ENCODE measurements at regions of chr10 and their contacts with region 1.

Region 1: DNA sequence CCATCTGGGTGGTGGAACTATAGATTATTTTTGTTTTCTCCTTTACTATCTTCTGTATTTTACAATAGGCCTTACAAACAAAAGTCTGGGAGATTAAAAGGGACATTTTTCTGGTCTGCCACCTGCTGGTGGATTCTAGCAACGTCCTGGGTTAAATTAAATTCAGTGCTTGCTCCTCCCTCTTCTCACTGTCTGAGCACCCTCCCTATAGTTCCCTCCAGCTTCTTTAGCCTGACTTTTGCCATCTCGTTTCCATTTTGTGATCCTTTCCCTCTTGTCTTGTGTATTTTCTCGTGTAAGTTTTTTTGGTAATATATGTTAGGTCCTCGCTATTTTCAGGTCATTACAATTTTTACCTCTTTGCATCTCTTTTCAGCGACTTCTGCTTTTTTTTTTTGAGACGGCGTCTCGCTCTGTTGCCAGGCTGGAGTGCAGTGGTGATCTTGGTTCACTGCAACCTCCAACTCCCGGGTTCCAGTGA is 16.1 kb downstream of the ANKRD16 start:
- DNase-seq: peak; percentile 90
- ATAC-seq: peak; percentile 88
- H3K4me3 ChIP-seq: peak overlapping the region; percentile 18 to 52 (median 41)
- H3K4me3 Mint-ChIP-seq: peak overlapping the region; percentile 89
- H3K27ac ChIP-seq: peak overlapping the region; percentile 70 to 76
- H3K27ac Mint-ChIP-seq: peak overlapping the region; percentile 93
- H3K4me1 ChIP-seq: peaks cover 12 to 19% of the 10 kb centered on the region in 2 donors
- H3K4me1 Mint-ChIP-seq: peaks cover 20% of the 10 kb centered on the region
- H3K27me3 ChIP-seq: no peaks in the 10 kb centered on the region
- H3K27me3 Mint-ChIP-seq: no peaks in the 10 kb centered on the region
- CTCF ChIP-seq: peak; percentile 85

Region 2: GRCh38 chr10:5446390-5446926 is 427.1 kb before region 1 on chr10:
- CTCF ChIA-PET with region 1: interaction called, 3 read pairs
- POLR2A ChIA-PET with region 1: no interaction called
- intact Hi-C with region 1: loop called (anchors 2 kb)
- DNase-seq: peak; percentile 89
- ATAC-seq: peak; percentile 96
- H3K4me3 ChIP-seq: peak overlapping the region; percentile 45 to 76 (median 62)
- H3K4me3 Mint-ChIP-seq: peak overlapping the region; percentile 91
- H3K27ac ChIP-seq: peak overlapping the region; percentile 30 to 44
- H3K27ac Mint-ChIP-seq: peak overlapping the region; percentile 87
- H3K4me1 ChIP-seq: peaks cover 20 to 21% of the 10 kb centered on the region in 2 donors
- H3K4me1 Mint-ChIP-seq: peaks cover 47% of the 10 kb centered on the region
- H3K27me3 ChIP-seq: no peaks in the 10 kb centered on the region
- H3K27me3 Mint-ChIP-seq: no peaks in the 10 kb centered on the region
- CTCF ChIP-seq: no peak

Region 3: DNA sequence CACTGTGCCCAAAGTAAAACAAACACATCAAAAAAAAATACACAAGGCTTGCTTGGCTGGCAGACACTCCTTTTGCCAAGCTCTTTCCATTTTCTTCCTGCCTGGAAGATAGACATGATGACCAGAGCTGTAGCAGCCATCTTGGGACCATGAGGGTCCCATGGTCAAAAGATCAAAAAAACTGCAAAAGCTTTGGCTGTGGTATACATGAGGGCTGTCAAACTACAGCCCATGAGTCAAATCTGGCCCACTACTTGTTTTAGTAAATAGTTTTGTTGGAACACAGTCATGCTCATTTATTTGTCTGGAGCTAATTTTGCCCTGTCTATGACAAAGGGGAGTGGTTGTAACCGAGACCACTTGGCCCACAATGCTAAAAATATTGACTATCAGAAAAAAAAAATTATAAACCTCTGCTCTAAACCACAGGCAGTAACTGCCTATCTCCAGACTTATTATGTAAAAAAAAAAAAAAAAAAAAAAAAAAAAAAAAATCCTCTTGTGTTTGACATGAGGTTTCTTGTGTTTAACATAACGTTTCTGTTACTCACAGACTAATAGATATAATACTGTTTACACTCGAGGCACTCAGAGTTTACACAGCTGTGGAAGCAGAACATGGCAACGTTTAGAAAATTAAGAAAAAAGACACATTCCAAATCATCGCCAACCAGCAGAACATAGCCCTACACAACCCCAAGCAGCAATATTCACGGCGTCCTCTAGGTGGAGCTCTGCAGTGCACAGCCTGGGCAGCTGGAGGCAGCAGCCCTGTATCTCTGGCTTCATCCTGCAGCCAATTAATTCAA is 244.0 kb before region 1 on chr10:
- CTCF ChIA-PET with region 1: interaction called, 5 read pairs
- POLR2A ChIA-PET with region 1: no interaction called
- intact Hi-C with region 1: loop called (anchors 1 kb)
- DNase-seq: peak; percentile 85
- ATAC-seq: peak; percentile 96
- H3K4me3 ChIP-seq: no peak overlapping the region
- H3K4me3 Mint-ChIP-seq: no peak overlapping the region
- H3K27ac ChIP-seq: no peak overlapping the region
- H3K27ac Mint-ChIP-seq: no peak overlapping the region
- H3K4me1 ChIP-seq: peaks cover 7 to 13% of the 10 kb centered on the region in 2 donors
- H3K4me1 Mint-ChIP-seq: peaks cover 10% of the 10 kb centered on the region
- H3K27me3 ChIP-seq: peaks cover 0 to 11% (median 5%) of the 10 kb centered on the region in 4 experiments
- H3K27me3 Mint-ChIP-seq: peaks cover 5% of the 10 kb centered on the region
- CTCF ChIP-seq: peak; percentile 97

Region 4: DNA sequence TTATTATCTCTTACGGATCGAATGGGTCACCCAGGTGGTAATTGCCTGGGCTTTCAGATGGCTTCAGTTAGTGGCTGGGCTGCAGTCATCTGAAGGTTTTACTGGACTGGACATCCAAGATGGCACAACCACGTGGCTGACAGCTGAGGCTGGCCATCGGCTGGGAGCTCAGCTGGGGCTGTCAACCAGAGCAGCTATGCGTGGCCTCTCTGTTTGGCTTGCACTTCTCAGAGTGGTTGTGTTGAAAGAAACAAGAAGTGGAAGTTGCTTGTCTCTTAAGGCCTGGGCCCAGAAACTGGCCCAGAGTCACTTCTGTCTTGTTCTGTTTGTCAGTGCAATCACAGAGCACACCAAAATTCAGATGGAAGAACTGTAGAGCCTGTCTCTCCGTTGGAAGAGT is 54.7 kb before region 1 on chr10:
- CTCF ChIA-PET with region 1: interaction called, 16 read pairs
- POLR2A ChIA-PET with region 1: interaction called, 6 read pairs
- intact Hi-C with region 1: no loop called
- DNase-seq: peak; percentile 72
- ATAC-seq: peak; percentile 54
- H3K4me3 ChIP-seq: peak overlapping the region in 1 of 5 experiments; percentile 4
- H3K4me3 Mint-ChIP-seq: peak overlapping the region; percentile 78
- H3K27ac ChIP-seq: peak overlapping the region; percentile 89 to 94
- H3K27ac Mint-ChIP-seq: peak overlapping the region; percentile 98
- H3K4me1 ChIP-seq: peaks cover 65 to 77% of the 10 kb centered on the region in 2 donors
- H3K4me1 Mint-ChIP-seq: peaks cover 64% of the 10 kb centered on the region
- H3K27me3 ChIP-seq: no peaks in the 10 kb centered on the region
- H3K27me3 Mint-ChIP-seq: no peaks in the 10 kb centered on the region
- CTCF ChIP-seq: no peak

Region 5: GRCh38 chr10:5840314-5841307 is 32.9 kb before region 1 on chr10:
- CTCF ChIA-PET with region 1: interaction called, 29 read pairs
- POLR2A ChIA-PET with region 1: interaction called, 8 read pairs
- intact Hi-C with region 1: loop called (anchors 1 kb)
- DNase-seq: peak; percentile 92
- ATAC-seq: peak; percentile 82
- H3K4me3 ChIP-seq: peak overlapping the region in 4 of 5 experiments; percentile 55 to 63 (median 58)
- H3K4me3 Mint-ChIP-seq: peak overlapping the region; percentile 94
- H3K27ac ChIP-seq: peak overlapping the region; percentile 99 to 100
- H3K27ac Mint-ChIP-seq: peak overlapping the region; percentile 100
- H3K4me1 ChIP-seq: peaks cover 68 to 77% of the 10 kb centered on the region in 2 donors
- H3K4me1 Mint-ChIP-seq: peaks cover 70% of the 10 kb centered on the region
- H3K27me3 ChIP-seq: no peaks in the 10 kb centered on the region
- H3K27me3 Mint-ChIP-seq: no peaks in the 10 kb centered on the region
- CTCF ChIP-seq: no peak

Region 6: DNA sequence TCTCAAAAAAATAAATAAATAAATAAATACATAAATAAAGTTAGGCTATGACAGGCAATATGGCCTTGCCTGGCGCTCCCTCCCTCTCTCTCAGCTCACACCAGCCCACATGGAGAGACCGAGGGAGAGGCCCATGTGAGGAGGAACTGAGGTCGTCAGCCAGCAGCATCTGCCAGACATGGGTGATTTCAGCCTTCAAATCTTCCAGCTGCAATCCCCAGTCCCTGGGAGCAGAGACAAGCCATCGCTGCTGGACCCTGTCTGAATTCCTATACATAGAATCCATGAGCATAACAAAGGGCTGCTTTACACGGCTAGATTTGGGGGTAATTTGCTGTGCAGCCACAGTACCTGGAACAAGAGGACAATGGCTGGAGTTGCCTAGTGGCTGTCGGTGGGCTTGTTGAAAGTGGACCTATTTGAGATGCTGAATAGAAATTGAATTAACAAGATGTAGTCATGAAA is 19.4 kb before region 1 on chr10:
- CTCF ChIA-PET with region 1: interaction called, 16 read pairs
- POLR2A ChIA-PET with region 1: interaction called, 9 read pairs
- intact Hi-C with region 1: loop called (anchors 1 kb)
- DNase-seq: no peak
- ATAC-seq: no peak
- H3K4me3 ChIP-seq: no peak overlapping the region
- H3K4me3 Mint-ChIP-seq: no peak overlapping the region
- H3K27ac ChIP-seq: no peak overlapping the region
- H3K27ac Mint-ChIP-seq: no peak overlapping the region
- H3K4me1 ChIP-seq: peaks cover 19 to 52% of the 10 kb centered on the region in 2 donors
- H3K4me1 Mint-ChIP-seq: peaks cover 37% of the 10 kb centered on the region
- H3K27me3 ChIP-seq: no peaks in the 10 kb centered on the region
- H3K27me3 Mint-ChIP-seq: no peaks in the 10 kb centered on the region
- CTCF ChIP-seq: no peak

Region 7: DNA sequence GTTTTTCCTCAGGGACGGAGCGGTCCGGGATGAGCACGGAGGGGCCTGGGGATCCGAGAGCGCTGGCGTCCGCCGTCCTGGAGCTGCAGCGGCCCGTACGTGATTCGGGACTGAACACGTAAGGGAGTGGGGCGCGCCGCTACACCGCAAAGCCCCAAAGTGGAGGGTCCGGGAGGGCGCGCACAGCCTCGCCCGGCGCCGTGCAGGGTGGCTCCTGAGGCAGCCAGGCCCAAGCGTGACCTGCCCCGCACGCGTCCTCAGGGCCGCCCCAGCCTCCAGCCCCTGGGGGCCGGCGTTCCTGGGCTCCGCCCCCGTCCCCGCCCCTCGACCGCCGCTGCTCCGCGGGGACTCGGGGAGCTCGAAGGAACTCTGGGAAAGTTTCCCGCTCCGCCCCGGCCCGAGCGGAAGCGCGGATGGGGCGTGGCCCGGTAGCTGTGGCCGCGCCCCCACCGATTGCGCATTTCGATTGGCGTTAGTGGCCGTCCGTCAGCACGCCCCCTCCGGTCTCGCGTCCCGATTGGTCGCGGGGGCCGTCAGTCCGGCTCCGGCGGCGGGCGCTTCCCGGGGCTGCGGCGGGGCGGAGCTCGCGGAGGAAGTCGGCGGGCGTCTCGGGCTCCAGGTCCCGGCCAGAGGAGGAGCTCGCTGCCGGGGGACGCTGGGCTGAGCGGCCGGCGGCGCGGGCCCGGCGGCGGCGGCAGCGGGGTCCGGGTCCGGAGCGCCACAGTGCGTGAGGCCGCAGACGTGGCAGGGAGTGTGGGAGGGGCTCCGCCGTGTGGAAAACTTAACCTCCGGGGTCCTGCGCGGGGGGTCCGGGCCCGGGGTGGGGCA is 16.3 kb after region 1 on chr10 and contains the starts of genes ANKRD16 and FBH1:
- CTCF ChIA-PET with region 1: interaction called, 25 read pairs
- POLR2A ChIA-PET with region 1: no interaction called
- intact Hi-C with region 1: loop called (anchors 1 kb)
- DNase-seq: peak; percentile 99
- ATAC-seq: peak; percentile 84
- H3K4me3 ChIP-seq: peak within 1 kb of the TSS; percentile 51 to 88 (median 77)
- H3K4me3 Mint-ChIP-seq: peak within 1 kb of the TSS; percentile 94
- H3K27ac ChIP-seq: peak within 1 kb of the TSS; percentile 48 to 77
- H3K27ac Mint-ChIP-seq: peak within 1 kb of the TSS; percentile 88
- H3K4me1 ChIP-seq: peaks cover 28 to 33% of the 10 kb centered on the region in 2 donors
- H3K4me1 Mint-ChIP-seq: peaks cover 58% of the 10 kb centered on the region
- H3K27me3 ChIP-seq: no peaks in the 10 kb centered on the region
- H3K27me3 Mint-ChIP-seq: no peaks in the 10 kb centered on the region
- CTCF ChIP-seq: no peak
- total RNA-seq, gene ANKRD16: 12.6 and 13.1 TPM in 2 replicates
- total RNA-seq, gene FBH1: 129 and 138 TPM in 2 replicates

Region 8: DNA sequence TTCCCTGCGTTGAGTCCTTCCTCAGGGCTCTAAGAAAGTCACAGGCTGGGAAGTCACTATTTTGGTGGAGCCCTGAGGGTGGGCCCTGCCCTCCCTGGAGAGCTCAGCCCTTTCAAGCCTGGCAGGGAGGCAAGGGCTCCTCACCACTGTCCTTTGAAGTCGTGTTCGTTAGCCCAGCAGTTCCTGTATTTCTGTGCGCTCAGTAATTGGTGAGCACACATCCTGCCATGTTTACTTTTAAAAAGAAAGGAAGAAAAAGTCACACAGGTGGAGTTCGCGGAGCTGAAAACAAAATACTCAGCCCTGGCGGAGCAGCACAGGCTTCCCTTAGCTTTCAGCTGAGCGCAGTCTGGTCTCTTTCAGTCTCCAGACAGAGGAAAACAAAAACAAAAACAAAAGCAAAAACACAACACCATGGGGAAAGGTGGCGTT is 669.5 kb after region 1 on chr10:
- CTCF ChIA-PET with region 1: no interaction called
- POLR2A ChIA-PET with region 1: no interaction called
- intact Hi-C with region 1: no loop called
- DNase-seq: no peak
- ATAC-seq: no peak
- H3K4me3 ChIP-seq: peak overlapping the region in 2 of 5 experiments; percentile 15 to 30
- H3K4me3 Mint-ChIP-seq: peak overlapping the region; percentile 62
- H3K27ac ChIP-seq: no peak overlapping the region
- H3K27ac Mint-ChIP-seq: no peak overlapping the region
- H3K4me1 ChIP-seq: peaks cover 5 to 10% of the 10 kb centered on the region in 2 donors
- H3K4me1 Mint-ChIP-seq: peaks cover 10% of the 10 kb centered on the region
- H3K27me3 ChIP-seq: peaks cover 0 to 4% (median 0%) of the 10 kb centered on the region in 4 experiments
- H3K27me3 Mint-ChIP-seq: peaks cover 25% of the 10 kb centered on the region
- CTCF ChIP-seq: no peak

Region 9: DNA sequence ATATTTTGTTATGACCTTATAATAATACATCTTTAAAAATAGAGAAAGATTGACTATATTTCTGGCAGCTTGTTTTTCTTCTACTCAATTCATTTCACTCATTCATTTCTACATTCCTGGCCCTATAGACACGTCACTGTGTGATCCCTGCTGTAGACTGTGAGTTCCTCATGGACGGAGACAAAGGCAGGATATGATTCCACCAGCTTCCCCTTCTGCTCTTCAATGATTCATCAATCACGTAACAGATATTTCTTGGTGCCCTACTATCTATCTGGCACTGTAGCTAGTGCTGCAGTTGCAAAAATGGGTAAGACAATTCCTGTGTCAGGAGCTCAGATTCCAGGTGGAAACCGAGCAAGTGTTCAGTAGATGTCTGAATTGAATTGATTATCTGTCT is 1122.3 kb after region 1 on chr10:
- CTCF ChIA-PET with region 1: no interaction called
- POLR2A ChIA-PET with region 1: no interaction called
- intact Hi-C with region 1: no loop called
- DNase-seq: no peak
- ATAC-seq: no peak
- H3K4me3 ChIP-seq: no peak overlapping the region
- H3K4me3 Mint-ChIP-seq: no peak overlapping the region
- H3K27ac ChIP-seq: no peak overlapping the region
- H3K27ac Mint-ChIP-seq: no peak overlapping the region
- H3K4me1 ChIP-seq: peaks cover 0 to 5% of the 10 kb centered on the region in 2 donors
- H3K4me1 Mint-ChIP-seq: peaks cover 2% of the 10 kb centered on the region
- H3K27me3 ChIP-seq: peaks cover 0 to 2% (median 0%) of the 10 kb centered on the region in 4 experiments
- H3K27me3 Mint-ChIP-seq: peaks cover 4% of the 10 kb centered on the region
- CTCF ChIP-seq: no peak